ENCODE measurements at regions of chr5 and their contacts with region 1.

Region 1: GRCh38 chr5:134648425-134649162 is at the start of gene SEC24A:
- DNase-seq: peak; percentile 91
- ATAC-seq: peak; percentile 92
- H3K4me3 Mint-ChIP-seq: peak within 1 kb of the TSS; percentile 86
- H3K27ac Mint-ChIP-seq: peak within 1 kb of the TSS; percentile 95
- H3K4me1 Mint-ChIP-seq: peaks cover 23% of the 10 kb centered on the region
- H3K27me3 Mint-ChIP-seq: no peaks in the 10 kb centered on the region
- total RNA-seq, gene SEC24A: 20.8 to 22.6 TPM

Region 2: GRCh38 chr5:134634227-134634626 is 14.4 kb before region 1 on chr5:
- CTCF ChIA-PET with region 1: interaction called, 5 read pairs
- POLR2A ChIA-PET with region 1: interaction called, 37 read pairs
- DNase-seq: no peak
- ATAC-seq: no peak
- H3K4me3 Mint-ChIP-seq: no peak overlapping the region
- H3K27ac Mint-ChIP-seq: no peak overlapping the region
- H3K4me1 Mint-ChIP-seq: peaks cover 16% of the 10 kb centered on the region
- H3K27me3 Mint-ChIP-seq: no peaks in the 10 kb centered on the region